ENCODE measurements at regions of chr10 and their contacts with region 1.

Region 1: DNA sequence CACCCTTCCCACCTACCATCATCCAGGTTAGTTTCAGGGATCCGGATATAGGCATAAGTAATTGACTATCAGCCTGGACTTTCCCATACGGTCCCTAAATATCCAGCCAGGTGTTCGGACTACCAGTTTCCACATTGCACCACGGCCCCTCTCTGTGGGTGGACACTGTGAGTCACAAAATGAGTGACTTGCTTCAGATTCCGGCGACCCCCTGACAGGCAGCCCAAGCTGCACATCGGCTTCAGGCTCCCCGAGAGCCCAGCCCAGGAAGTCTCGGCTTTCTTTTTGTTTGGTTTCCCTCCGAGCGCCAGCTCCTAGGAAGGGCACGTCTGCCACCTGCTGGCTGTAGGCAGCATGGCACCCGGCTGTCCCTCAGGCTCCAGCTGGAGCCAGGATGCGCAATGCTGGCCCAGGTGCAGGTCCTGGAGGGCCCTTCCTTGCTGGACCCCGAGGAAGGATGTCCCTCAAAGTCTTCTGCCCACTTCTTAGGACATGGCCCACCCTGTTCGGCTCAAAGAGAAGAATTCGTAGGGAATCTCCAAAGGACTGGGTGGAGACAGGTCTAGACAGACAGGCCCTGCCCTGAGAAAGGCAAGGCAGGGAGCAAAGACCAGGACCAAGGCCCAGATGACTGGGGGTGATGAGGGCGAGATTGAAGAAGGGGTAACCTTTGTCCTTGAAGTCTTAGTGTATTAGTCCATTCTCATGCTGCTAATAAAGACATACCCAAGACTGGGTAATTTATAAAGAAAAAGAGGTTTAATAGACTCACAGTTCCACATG is 10.6 kb downstream of the HABP2 start:
- DNase-seq: peak; percentile 84
- ATAC-seq: peak; percentile 96
- H3K4me3 Mint-ChIP-seq: peak overlapping the region; percentile 46
- H3K27ac Mint-ChIP-seq: no peak overlapping the region
- H3K4me1 Mint-ChIP-seq: peaks cover 2% of the 10 kb centered on the region
- H3K27me3 Mint-ChIP-seq: peaks cover 5% of the 10 kb centered on the region

Region 2: DNA sequence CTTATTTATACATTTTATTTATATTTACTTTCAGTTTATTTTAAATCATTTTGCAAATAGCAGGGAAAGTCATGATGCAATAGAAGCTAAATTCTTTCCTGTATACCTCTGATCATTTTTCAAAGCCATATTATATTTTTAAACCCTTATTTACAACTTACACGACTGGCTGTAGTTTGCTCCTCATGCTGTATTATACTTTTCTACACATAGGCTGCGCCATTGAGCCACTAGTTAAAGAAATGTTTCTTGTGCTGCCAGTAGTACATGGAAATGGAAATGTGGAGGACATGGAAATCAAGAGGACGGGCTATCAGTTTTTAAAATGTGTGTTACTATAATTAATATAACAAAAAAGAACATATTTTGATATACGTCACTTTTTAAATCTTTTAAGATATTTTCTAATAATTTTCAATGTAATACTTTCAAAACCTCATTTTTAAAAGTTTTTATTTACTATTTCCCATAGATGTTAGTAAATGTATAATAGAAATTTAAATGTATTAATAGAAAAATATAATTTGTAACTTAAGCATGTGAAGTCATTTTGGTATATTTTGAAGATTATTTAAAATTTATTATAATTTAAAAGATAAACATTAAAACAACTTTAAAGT is 998.0 kb before region 1 on chr10:
- CTCF ChIA-PET with region 1: no interaction called
- POLR2A ChIA-PET with region 1: no interaction called
- intact Hi-C with region 1: loop called in 1 of 2 experiments (anchors 5 kb)
- DNase-seq: peak; percentile 22
- ATAC-seq: peak; percentile 49
- H3K4me3 Mint-ChIP-seq: no peak overlapping the region
- H3K27ac Mint-ChIP-seq: no peak overlapping the region
- H3K4me1 Mint-ChIP-seq: no peaks in the 10 kb centered on the region
- H3K27me3 Mint-ChIP-seq: no peaks in the 10 kb centered on the region

Region 3: DNA sequence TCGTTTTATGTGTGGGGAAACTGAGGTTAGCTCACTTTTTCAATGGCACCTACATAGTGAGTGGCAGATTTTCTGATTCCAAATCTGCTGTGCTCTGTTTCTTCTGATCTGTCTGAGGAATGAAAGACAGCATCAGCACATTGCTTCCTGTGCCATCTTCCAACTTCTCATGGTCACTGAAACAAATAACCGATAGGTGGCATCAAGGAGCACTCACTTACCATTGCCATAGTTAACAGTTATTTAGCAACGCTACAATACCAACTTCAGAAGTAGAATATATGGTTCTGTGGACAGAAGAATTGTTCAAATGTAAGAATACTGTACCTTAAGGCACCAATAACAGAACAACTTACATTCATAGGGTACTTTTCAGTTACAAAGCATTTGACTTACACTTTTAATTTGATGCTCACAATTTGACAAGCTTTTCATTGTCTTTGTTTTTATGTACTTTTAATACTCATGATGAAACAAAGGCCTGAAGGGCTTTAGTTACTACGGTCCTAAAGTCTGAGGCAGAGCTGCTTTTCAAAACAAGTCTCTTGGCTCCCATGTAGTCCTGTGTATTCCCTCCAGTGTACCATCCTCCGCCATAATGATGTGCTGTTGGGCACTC is 842.3 kb before region 1 on chr10:
- CTCF ChIA-PET with region 1: no interaction called
- POLR2A ChIA-PET with region 1: no interaction called
- intact Hi-C with region 1: loop called in 1 of 2 experiments (anchors 2 kb)
- DNase-seq: no peak
- ATAC-seq: peak; percentile 51
- H3K4me3 Mint-ChIP-seq: no peak overlapping the region
- H3K27ac Mint-ChIP-seq: no peak overlapping the region
- H3K4me1 Mint-ChIP-seq: no peaks in the 10 kb centered on the region
- H3K27me3 Mint-ChIP-seq: no peaks in the 10 kb centered on the region

Region 4: DNA sequence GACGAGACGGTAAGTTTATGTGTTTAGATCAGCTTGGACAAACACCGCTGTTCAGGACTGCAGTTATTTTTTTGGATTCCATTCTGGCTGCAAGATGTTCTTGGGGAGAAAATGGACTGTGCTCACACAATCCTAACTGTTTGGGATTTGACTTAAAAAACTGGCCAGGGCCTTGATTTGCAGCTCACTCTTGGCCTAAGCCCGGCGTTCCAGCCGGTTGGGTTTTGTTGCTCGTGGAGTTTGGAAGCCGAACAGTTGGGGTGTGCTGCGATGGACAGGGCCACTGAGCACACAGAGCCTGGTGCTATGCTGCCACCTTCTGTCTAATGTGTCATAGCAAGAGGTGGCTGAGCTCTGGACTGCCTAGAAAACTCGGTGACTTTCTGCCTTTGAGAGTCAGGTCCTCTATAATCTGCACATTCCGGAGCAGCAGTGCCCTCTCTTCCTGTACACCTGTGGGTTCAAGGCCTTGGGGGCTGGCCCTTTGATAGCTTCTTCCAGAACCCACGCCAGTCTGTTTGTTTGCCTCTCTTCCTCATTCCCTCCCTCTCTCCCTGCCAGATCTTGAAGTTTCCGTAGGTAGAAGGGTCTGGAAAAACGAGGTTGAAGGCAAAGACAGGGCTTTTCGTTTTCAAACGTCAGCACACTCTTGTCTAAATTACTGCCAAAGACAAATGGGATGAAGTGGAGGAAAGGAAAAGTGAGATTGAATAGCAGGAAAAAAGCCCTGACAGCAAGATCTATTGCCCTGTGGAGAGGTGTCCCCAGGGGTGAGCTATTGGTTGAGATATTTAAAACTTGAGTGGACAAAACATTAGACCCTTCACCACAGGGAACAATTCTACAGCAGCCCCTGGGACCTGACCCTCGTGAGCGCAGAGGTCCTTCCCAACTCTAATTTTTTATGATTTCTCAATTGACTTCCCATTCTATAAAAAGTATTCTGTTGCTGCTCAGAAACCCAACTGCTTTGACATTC is 178.2 kb before region 1 on chr10:
- CTCF ChIA-PET with region 1: interaction called, 3 read pairs
- POLR2A ChIA-PET with region 1: no interaction called
- intact Hi-C with region 1: loop called in 1 of 2 experiments (anchors 5 kb)
- DNase-seq: peak; percentile 71
- ATAC-seq: peak; percentile 96
- H3K4me3 Mint-ChIP-seq: no peak overlapping the region
- H3K27ac Mint-ChIP-seq: no peak overlapping the region
- H3K4me1 Mint-ChIP-seq: peaks cover 19% of the 10 kb centered on the region
- H3K27me3 Mint-ChIP-seq: peaks cover 5% of the 10 kb centered on the region

Region 5: DNA sequence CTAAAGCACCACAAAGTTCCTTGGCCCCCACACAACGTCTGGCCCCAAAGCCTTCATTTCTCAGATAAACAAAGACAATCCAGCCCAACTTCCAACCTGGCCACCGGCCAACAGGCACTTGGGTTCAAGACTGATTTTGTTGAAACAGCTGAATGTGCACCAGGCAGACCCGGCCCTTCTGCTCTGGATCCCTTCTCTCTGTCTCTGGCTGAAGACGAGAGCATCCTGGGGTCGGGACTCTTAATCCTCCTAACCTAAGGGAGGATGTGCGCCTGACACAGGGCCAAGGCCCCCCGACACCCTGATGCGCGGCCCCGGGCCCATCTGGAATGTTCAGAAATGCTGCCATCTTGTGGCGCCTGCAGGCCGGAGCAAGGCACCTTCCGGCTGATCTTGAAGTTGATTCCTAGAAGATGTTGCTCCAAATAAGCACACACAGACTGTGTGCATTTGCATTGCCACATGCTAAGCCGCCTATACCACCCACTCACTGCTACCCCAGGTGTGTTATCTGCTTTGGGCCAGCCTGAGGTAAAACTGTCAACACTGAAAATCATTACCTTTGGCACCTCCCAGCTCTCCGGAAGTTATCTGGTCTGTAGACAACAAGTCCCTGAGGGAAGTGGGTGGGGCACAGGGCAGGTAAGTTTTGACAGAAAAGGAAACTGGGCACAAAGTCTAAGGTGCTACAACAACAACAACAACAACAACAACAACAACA is 109.0 kb before region 1 on chr10:
- CTCF ChIA-PET with region 1: no interaction called
- POLR2A ChIA-PET with region 1: no interaction called
- intact Hi-C with region 1: loop called in 1 of 2 experiments (anchors 5 kb)
- DNase-seq: peak; percentile 59
- ATAC-seq: peak; percentile 53
- H3K4me3 Mint-ChIP-seq: no peak overlapping the region
- H3K27ac Mint-ChIP-seq: no peak overlapping the region
- H3K4me1 Mint-ChIP-seq: no peaks in the 10 kb centered on the region
- H3K27me3 Mint-ChIP-seq: peaks cover 5% of the 10 kb centered on the region

Region 6: GRCh38 chr10:113521123-113521795 is 42.2 kb before region 1 on chr10:
- CTCF ChIA-PET with region 1: interaction called, 6 read pairs
- POLR2A ChIA-PET with region 1: no interaction called
- intact Hi-C with region 1: loop called in 1 of 2 experiments (anchors 1 kb)
- DNase-seq: peak; percentile 56
- ATAC-seq: peak; percentile 42
- H3K4me3 Mint-ChIP-seq: no peak overlapping the region
- H3K27ac Mint-ChIP-seq: no peak overlapping the region
- H3K4me1 Mint-ChIP-seq: no peaks in the 10 kb centered on the region
- H3K27me3 Mint-ChIP-seq: peaks cover 8% of the 10 kb centered on the region

Measured in activated CD4-positive, alpha-beta T cell treated with anti-CD3 and anti-CD28 coated beads for 36 hours (primary cell).